ENCODE measurements at regions of chr10 and their contacts with region 1.

Region 1: DNA sequence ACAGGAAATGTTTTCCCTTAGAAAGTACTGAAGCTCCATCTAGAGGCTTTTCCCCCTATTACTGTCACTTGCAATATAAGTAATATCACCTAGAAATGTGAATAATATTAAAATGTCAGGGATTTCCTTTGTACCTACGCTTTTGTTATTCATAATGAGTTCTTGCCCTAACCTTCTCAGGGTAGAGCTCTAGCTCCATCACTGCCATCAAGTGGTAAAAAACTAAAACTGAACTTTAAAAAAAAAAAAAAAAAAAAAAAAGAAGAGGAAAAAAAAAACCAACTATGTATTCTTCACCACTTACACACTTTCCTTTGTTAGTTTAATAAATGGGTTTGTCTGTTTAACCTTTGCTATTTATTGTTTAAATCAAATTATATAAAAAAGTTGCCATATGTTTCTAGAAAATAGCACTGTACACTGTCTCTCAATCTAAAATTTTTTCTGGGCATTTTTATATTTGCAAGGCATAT is 49.9 kb downstream of the DNAJC1 start:
- DNase-seq: peak; percentile 45 to 55 (median 50)
- ATAC-seq: peak; percentile 75
- H3K4me3 ChIP-seq: no peak overlapping the region
- H3K27ac ChIP-seq: no peak overlapping the region
- H3K4me1 ChIP-seq: peaks cover 4 to 7% of the 10 kb centered on the region in 2 experiments; a peak in 3 of 5 replicates
- H3K27me3 ChIP-seq: no peaks in the 10 kb centered on the region
- CTCF ChIP-seq: peak in 2 of 3 experiments; percentile 23 to 66; a peak in 2 of 6 replicates
- EP300 ChIP-seq: no peak
- POLR2A ChIP-seq: no peak
- RAD21 ChIP-seq: peak; percentile 36 to 57; a peak in 3 of 4 replicates

Region 2: GRCh38 chr10:21069929-21070700 is 883.5 kb before region 1 on chr10:
- CTCF ChIA-PET with region 1: no interaction called
- POLR2A ChIA-PET with region 1: no interaction called
- in situ Hi-C with region 1: loop called (anchors 25 kb)
- intact Hi-C with region 1: no loop called
- DNase-seq: no peak
- ATAC-seq: peak; percentile 68
- H3K4me3 ChIP-seq: no peak overlapping the region
- H3K27ac ChIP-seq: no peak overlapping the region
- H3K4me1 ChIP-seq: no peaks in the 10 kb centered on the region
- H3K27me3 ChIP-seq: 0 out of 5 replicates have a peak, but pooled peaks cover 0 to 5% of the 10 kb centered on the region in 2 experiments
- CTCF ChIP-seq: no peak
- EP300 ChIP-seq: no peak
- POLR2A ChIP-seq: no peak
- RAD21 ChIP-seq: no peak

Region 3: DNA sequence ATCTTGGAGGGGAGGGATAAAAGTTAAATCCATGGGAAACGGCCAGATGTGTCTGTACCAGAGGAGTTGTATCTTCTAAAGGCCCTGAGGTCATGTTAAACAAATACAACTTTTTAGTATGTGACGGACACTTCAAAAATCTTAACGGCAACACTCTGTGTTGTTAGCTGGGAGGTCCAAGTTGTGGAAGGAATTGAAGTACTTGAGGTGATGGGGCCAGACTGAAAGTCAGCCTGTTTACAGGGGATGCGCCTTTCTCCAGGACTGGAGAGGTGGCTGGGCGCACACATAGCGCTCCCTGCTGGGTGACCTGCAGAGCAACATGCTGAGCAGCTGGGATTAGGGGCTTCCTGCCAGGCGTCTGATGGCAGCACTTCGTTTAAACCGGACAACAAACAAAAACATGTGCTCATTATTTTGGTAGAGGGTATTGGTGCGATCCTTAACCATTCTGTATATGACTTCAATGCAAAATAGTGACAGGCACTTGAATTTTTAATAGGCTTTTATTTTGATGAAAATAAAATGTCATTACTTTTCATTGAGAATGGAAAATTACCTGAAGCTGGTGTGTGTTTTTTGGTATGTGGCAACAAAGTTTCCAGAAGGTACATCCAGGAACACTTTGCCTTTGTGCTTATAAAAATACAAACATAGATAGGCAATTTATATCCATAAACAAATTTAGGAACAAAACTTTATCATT is 221.4 kb before region 1 on chr10:
- CTCF ChIA-PET with region 1: interaction called, 4 read pairs
- POLR2A ChIA-PET with region 1: no interaction called
- in situ Hi-C with region 1: no loop called
- intact Hi-C with region 1: loop called (anchors 5 kb)
- DNase-seq: peak; percentile 56 to 74 (median 68)
- ATAC-seq: peak; percentile 99
- H3K4me3 ChIP-seq: no peak overlapping the region
- H3K27ac ChIP-seq: no peak overlapping the region
- H3K4me1 ChIP-seq: no peaks in the 10 kb centered on the region; a peak in 1 of 5 replicates
- H3K27me3 ChIP-seq: no peaks in the 10 kb centered on the region
- CTCF ChIP-seq: peak; percentile 80 to 92 (median 83)
- EP300 ChIP-seq: no peak
- POLR2A ChIP-seq: no peak
- RAD21 ChIP-seq: peak; percentile 73 to 92

Region 4: DNA sequence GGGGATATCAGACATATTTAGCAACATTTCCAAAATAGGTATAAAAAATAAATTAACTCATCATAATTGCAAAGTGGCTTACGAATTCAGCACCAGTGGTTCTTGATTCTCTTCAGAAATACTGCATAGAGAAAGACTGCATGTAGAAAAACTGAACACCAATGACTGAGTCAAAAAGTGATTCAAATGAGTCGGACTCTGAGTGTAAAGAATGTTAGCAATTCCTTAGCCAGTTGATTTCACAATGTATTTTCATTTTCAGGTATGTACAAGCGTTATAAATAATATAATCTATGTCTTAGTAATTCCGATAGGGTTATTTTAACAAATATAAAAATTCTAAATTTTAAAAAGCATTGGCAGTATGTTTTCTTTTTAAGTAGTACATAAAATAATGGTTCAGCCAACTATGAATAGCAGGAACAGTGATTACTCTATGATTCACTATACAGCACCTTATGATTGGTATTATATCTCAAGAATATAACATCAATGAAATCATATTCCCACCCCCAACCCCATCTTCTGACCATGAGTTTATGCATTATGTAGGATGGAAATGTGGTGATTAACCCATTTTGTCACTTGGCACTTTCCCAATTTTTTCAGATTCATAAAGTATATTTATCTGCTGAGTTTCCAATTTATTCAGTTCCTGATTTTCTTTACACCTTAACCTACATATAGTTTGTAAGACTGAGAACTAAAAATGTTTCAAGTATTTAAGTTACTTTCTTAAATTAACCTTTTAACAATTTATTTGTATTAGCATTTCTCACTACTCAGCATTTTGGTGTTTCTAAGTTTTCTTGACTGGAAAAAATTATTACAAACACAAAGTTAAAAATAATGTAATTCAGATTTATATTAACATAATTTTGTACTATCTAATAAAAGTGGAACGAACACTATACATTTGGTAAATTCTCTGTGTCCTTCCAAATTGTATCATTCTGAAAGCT is 16.0 kb after region 1 on chr10:
- CTCF ChIA-PET with region 1: no interaction called
- POLR2A ChIA-PET with region 1: no interaction called
- in situ Hi-C with region 1: no loop called
- intact Hi-C with region 1: no loop called
- DNase-seq: no peak
- ATAC-seq: no peak
- H3K4me3 ChIP-seq: no peak overlapping the region
- H3K27ac ChIP-seq: no peak overlapping the region
- H3K4me1 ChIP-seq: no peaks in the 10 kb centered on the region
- H3K27me3 ChIP-seq: no peaks in the 10 kb centered on the region
- CTCF ChIP-seq: no peak
- EP300 ChIP-seq: no peak
- POLR2A ChIP-seq: no peak
- RAD21 ChIP-seq: no peak

Region 5: DNA sequence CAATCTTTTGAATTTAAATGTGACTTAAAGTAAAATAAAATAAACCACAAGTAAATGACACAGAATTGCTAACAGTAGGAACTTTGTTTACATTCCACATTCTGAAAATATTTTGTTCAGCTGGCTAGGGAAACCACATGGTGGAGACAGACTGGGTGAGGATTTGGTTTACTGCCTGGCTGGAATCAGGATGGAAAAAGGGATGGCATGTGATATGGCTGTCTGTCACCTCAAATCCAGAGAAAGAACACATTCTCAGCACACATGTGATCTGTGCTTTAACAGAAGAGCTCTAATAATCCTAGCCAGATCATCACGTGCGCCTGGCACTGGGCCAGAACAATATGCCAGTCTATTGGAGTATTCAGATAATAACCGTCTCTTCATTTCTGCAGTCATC is 851.7 kb after region 1 on chr10:
- CTCF ChIA-PET with region 1: no interaction called
- POLR2A ChIA-PET with region 1: no interaction called
- in situ Hi-C with region 1: no loop called
- intact Hi-C with region 1: no loop called
- DNase-seq: peak in 1 of 4 experiments; percentile 10
- ATAC-seq: no peak
- H3K4me3 ChIP-seq: no peak overlapping the region
- H3K27ac ChIP-seq: no peak overlapping the region
- H3K4me1 ChIP-seq: no peaks in the 10 kb centered on the region
- H3K27me3 ChIP-seq: no peaks in the 10 kb centered on the region
- CTCF ChIP-seq: no peak
- EP300 ChIP-seq: no peak
- POLR2A ChIP-seq: no peak
- RAD21 ChIP-seq: no peak

Measured in K562 (cell line).